Mammary epithelial cell (primary cell): ENCODE measurements at regions of chr16 and their contacts with region 1.

Region 1: GRCh38 chr16:78099372-78100161 is at the start of gene WWOX:
- DNase-seq: peak; percentile 99
- H3K4me3 ChIP-seq: peak within 1 kb of the TSS; percentile 72 to 97 (median 89)
- H3K27ac ChIP-seq: peak within 1 kb of the TSS; percentile 78
- H3K4me1 ChIP-seq: peaks cover 14% of the 10 kb centered on the region
- H3K27me3 ChIP-seq: no peaks in the 10 kb centered on the region
- CTCF ChIP-seq: peak; percentile 57 to 95
- total RNA-seq, gene WWOX: 11.0 TPM

Region 2: DNA sequence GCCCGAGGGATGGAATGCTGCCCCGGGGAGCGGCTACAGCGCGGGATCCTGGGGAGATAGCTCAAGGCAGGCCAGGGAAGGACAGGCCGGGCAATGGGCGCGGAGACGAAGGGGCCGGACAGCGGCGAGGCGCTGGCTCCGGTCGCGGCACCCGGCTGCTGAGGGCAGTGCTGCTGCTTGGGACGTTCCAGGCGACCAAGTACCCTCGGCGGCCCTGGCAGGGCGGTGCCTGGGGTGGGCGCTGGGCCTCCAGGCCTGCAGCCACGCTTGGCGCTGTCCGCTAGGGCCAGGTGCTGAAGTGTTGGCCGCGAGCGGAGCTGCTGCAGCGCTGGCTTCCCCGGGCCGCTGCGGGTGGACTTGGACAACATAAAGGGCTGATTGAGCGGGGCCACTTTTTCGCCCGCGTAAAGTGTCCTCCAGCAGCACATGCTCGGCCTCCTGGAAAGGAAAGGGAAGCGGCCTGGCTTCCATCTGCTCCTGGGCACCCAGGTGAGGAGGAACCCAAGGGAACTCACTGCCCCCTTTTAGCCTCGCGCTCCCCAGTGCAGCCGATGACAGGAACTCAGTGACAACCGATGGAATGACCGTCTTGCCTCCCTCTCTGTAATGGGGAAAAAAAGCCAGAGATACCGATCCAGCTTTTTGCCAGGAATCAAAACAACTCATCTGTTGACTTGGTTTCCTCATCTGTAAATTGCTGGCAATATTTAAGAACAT is 53.5 kb before region 1 on chr16:
- CTCF ChIA-PET with region 1: no interaction called
- dilution Hi-C with region 1: no loop called
- in situ Hi-C with region 1: no loop called
- intact Hi-C with region 1: loop called (anchors 5 kb)
- DNase-seq: peak; percentile 57
- H3K4me3 ChIP-seq: no peak overlapping the region
- H3K27ac ChIP-seq: no peak overlapping the region
- H3K4me1 ChIP-seq: no peaks in the 10 kb centered on the region
- H3K27me3 ChIP-seq: no peaks in the 10 kb centered on the region
- CTCF ChIP-seq: peak in 1 of 2 donors; percentile 10

Region 3: DNA sequence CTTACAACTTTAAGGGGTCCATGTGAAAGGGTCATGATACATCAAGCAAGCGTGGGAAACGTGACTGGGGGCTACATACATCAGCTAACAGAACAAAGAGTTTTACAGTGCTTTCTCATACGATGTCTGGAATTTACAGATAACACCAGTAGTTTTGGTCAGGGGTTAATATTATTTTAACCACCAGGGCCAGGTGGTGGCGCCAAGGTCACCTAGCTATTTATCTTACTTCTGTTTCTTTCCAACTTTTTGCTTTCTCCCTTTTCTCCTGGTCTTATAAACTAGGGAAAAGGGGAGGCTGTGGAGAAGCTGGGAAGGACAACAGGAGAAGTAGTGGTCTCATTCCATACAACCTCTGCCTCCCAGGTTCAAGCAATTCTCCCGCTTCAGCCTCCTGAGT is 39.3 kb before region 1 on chr16:
- CTCF ChIA-PET with region 1: no interaction called
- dilution Hi-C with region 1: no loop called
- in situ Hi-C with region 1: no loop called
- intact Hi-C with region 1: no loop called
- DNase-seq: no peak
- H3K4me3 ChIP-seq: no peak overlapping the region
- H3K27ac ChIP-seq: no peak overlapping the region
- H3K4me1 ChIP-seq: no peaks in the 10 kb centered on the region
- H3K27me3 ChIP-seq: no peaks in the 10 kb centered on the region
- CTCF ChIP-seq: no peak